ENCODE measurements at regions of chr12 and their contacts with region 1.

Region 1: GRCh38 chr12:4107436-4107878 is 166.1 kb upstream of the CCND2 start:
- DNase-seq: peak; percentile 75
- H3K4me3 Mint-ChIP-seq: peak overlapping the region; percentile 59
- H3K27ac Mint-ChIP-seq: peak overlapping the region; percentile 94
- H3K4me1 Mint-ChIP-seq: peaks cover 58% of the 10 kb centered on the region
- H3K27me3 Mint-ChIP-seq: peaks cover 4% of the 10 kb centered on the region

Region 2: DNA sequence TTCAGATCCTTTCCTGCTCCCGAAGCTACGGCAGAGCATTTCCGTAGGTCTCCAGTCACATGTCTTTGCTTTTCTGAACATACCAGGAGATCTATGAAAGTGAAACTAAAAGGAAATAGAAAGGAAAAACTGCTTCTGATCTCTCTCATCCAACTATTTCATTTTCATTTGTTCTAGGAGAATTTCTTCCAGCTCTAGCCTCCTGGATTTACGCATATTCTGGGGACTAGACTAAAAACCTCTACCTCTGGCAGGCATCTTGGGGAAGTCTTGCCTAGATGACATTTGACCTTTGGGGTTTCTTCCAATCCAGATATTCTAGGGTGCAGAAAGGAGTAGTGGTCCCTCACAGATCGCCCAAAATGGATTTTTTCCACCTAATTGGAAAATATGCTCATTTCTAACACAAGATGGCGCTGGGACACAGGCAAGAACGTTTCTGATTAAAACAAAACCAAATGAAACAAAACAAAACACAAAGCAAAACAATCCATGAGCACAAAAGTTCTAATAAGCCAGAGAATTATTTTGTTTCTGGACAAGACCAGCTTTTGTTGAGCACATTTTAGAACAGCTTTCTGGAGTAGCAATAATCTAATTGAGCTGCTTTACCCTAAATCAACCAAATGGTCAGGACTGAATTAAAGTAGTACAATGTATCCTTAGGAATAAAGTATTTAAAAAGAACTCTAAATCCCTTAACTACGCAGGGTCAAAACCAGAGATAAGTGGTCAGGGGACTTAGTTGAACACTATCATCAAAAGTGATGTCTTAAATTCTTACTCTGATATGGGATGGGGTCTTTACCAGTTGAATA is 222.0 kb before region 1 on chr12:
- intact Hi-C with region 1: loop called (anchors 1 kb)
- DNase-seq: no peak
- H3K4me3 Mint-ChIP-seq: no peak overlapping the region
- H3K27ac Mint-ChIP-seq: no peak overlapping the region
- H3K4me1 Mint-ChIP-seq: peaks cover 8% of the 10 kb centered on the region
- H3K27me3 Mint-ChIP-seq: peaks cover 12% of the 10 kb centered on the region

Region 3: DNA sequence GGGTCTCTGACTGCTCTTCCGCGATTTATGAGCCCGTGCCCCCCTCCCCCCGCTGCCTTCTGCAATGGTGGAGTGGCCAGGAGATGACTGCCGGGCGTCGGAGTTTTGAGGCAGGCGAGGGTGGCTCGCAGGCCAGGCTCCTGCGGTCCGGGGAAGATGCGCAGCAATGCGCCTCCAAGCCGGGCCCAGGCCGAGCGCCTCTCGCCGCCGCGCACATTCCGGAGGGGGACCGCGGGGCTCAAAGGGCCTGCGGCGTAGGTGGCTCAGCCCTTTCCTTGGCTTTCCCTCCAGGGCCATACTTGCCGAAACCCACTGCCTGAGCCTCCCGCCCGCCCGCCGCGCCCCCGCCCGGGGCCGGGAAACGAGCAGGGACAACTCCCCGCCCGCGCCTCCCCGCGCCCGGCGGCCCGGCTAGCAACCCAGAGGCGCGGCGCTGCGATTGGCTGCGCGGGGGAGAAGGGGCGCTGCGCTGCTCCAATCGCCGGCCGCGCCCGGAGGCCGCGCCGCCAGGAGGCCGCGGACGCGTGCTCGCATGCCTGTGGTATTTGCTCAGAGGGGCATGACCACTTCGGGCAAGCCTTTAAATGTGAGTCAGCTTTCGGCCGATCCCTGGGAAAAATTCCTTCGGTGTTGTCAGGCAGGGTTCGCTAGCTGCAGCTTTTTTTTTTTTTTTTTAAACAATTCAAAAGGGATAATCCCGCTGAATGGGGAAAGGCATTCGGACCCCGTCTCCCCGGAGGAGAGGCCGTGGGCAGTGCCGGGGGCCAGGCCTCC is 76.3 kb before region 1 on chr12:
- intact Hi-C with region 1: loop called (anchors 1 kb)
- DNase-seq: peak; percentile 69
- H3K4me3 Mint-ChIP-seq: peak overlapping the region; percentile 62
- H3K27ac Mint-ChIP-seq: no peak overlapping the region
- H3K4me1 Mint-ChIP-seq: peaks cover 22% of the 10 kb centered on the region
- H3K27me3 Mint-ChIP-seq: peaks cover 17% of the 10 kb centered on the region

Region 4: DNA sequence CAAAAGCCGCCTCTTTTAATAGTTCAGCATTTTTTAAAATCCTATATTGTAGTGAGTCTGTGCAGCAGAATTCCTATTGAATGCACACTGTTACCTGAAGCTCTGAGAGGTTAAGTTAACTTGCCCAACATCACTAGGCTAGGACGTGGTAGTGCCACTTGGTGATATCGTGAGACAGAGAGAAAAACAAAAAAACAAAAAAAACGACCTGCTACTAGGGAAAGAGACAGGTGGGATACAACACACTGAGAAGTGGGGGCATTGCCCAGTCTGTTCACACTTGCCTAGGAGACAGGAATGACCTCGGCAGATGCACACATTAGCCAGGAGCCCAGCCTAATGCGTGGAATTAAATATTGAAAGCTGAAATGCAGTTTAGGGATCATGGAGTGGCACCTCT is 36.4 kb after region 1 on chr12:
- intact Hi-C with region 1: loop called (anchors 1 kb)
- DNase-seq: no peak
- H3K4me3 Mint-ChIP-seq: peak overlapping the region; percentile 23
- H3K27ac Mint-ChIP-seq: peak overlapping the region; percentile 68
- H3K4me1 Mint-ChIP-seq: peaks cover 97% of the 10 kb centered on the region
- H3K27me3 Mint-ChIP-seq: no peaks in the 10 kb centered on the region

Region 5: DNA sequence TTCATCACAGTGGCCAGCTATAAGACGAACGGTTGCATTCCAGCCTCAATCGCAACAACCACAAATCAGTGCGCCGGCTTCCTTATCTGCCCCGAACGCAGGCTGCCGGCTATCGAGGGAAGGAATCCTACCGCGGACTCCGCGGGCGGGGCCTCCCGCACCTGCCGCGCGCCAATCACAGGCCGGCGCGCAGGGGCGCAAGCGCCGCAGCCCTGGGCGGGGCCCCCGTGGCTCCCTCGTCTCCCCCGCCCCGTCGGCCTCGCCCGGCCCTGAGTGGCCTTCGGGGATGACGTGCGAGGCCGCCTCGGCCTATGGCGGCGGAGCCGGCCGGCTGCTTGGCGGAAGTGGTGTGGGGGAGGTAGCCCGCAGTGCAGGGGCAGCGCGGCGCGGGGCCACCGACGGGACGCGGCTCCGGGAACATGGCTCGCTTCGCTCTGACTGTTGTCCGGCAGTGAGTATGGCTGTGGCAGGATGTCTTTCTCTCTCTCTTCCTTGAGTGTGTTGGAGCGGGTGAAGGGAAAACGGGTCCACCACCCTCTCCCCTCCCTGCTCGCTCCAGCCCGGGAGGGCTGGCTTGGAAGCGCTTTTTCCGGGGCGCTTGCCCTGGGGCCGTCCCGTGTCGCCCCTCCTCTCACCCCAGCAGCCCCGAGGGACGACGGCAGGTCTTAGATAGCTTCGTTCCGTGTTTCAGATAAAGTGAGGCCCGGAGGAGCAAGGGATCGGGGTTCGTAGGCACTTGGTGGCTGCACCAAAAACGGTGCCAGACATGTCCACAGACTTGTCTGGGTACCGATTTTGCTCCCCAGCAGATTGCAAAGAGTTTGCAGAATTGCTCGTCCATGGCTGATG is 213.6 kb after region 1 on chr12 and contains the start of gene TIGAR:
- intact Hi-C with region 1: loop called (anchors 1 kb)
- DNase-seq: peak; percentile 93
- H3K4me3 Mint-ChIP-seq: peak within 1 kb of the TSS; percentile 93
- H3K27ac Mint-ChIP-seq: peak within 1 kb of the TSS; percentile 93
- H3K4me1 Mint-ChIP-seq: peaks cover 45% of the 10 kb centered on the region
- H3K27me3 Mint-ChIP-seq: no peaks in the 10 kb centered on the region
- total RNA-seq, gene TIGAR: 14.4 TPM in 2 replicates

Measured in activated T-helper 1 cell treated with anti-CD3 and anti-CD28 coated beads, Interleukin-12 subunit alpha, Interleukin-12 subunit beta, Interleukin-2, Interleukin-4 antibody, amounts not matched to agents 30 ng/mL and 10 ng/mL and 1 ng/mL, durations not matched to agents 14 hours and 24 hours and 36 hours (primary cell).